ENCODE measurements at regions of chr11 and their contacts with region 1.

Region 1: GRCh38 chr11:67239783-67240575 is 26.3 kb upstream of the GRK2 start:
- DNase-seq: peak; percentile 99
- ATAC-seq: peak; percentile 94
- H3K4me3 Mint-ChIP-seq: peak overlapping the region; percentile 95
- H3K27ac Mint-ChIP-seq: peak overlapping the region; percentile 93
- H3K4me1 Mint-ChIP-seq: peaks cover 44% of the 10 kb centered on the region
- H3K27me3 Mint-ChIP-seq: no peaks in the 10 kb centered on the region

Region 2: GRCh38 chr11:67252831-67253239 is 12.9 kb after region 1 on chr11:
- CTCF ChIA-PET with region 1: interaction called, 22 read pairs
- DNase-seq: peak; percentile 73
- ATAC-seq: peak; percentile 85
- H3K4me3 Mint-ChIP-seq: no peak overlapping the region
- H3K27ac Mint-ChIP-seq: peak overlapping the region; percentile 58
- H3K4me1 Mint-ChIP-seq: peaks cover 61% of the 10 kb centered on the region
- H3K27me3 Mint-ChIP-seq: no peaks in the 10 kb centered on the region